ACHN (cell line): ENCODE measurements at regions of chr16 and their contacts with region 1.

Region 1: DNA sequence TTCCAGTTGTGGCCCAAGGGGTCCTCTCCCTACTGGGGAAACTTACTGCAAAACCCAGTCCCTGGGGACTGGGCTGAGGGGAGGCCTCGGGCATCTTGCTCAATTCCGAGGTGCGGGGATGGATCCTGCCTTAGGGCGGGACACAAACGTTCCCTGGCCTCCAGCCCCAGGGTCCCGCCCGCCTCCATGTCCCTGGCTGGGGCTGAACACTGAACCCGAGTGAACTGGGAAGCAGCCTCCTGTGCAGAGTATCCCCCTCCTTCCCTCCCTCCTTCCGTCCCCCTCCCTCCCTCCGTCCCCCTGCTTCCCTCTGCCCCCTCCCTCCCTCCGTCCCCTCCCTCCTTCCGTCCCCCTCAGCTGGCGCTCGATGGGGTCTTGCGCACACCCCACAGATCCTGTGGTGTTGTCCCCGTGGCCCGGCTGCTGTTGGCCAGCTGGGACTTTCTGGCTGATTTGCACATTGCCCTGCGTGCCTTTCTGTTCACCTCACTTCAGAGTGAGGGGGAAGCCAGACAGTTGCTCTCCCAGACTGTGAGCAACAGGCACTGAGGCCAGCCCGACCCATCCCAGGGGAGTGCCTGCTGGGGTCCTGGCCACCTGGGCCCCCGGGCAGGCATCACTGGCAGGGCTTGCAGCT is 5.5 kb downstream of the TRAF7 start:
- DNase-seq: no peak

Region 2: DNA sequence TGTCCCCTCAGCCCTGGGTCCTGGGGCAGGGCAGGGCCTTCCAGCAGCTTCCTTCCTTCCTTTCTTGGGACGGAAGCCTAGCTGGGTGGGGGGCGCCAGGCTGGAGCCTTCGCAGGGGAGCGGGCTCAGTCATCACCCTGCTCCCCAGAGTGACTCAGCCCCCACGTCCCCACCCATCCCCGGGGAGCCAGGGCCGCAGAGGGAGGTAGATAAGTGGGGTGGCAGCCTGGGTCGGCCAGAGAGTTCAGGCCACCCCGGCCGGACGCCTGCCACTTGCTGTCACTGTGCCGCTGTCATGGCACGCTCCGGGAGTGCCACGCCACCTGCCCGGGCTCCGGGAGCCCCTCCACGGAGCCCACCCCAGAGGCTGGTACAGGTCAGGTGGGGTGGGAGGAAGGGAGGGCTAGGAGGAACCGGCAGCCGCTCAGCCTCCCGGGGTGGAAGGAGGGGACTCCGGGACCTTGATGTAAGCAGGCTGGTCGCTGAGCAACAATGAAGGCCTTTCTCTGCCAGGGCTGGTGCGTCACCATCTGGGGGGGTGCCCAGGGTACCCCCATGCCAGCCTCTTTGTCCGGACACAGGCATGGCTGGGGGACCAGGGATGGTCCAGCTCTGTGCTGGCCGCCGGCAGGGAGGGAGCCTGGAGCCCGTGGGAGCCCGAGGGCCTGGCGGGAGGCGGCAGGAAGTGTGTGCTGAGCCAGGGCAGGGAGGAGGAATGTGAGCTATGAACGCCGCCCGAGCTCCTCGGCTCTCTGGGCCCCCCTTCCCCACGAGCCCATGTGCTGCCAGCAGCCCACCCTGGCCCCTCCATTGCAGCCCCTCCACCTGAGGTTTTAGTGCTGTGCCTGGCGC is 127.8 kb before region 1 on chr16:
- in situ Hi-C with region 1: loop called (anchors 10 kb)
- DNase-seq: no peak